Right lobe of liver (tissue), 6 donors: ENCODE measurements at regions of chr11 and their contacts with region 1.

Region 1: GRCh38 chr11:86193297-86194095 is 51.1 kb upstream of the EED start:
- DNase-seq: peak; percentile 59 to 76 (median 66)
- ATAC-seq: peak; percentile 99 to 100 (median 100)
- H3K4me3 ChIP-seq: peak overlapping the region in 2 of 3 donors; percentile 13 to 28
- H3K27ac ChIP-seq: peak overlapping the region in 2 of 3 donors; percentile 20 to 21
- H3K4me1 ChIP-seq: peaks cover 0 to 10% (median 0%) of the 10 kb centered on the region in 4 donors
- H3K27me3 ChIP-seq: no peaks in the 10 kb centered on the region
- CTCF ChIP-seq: peak; percentile 74 to 88 (median 78)
- POLR2A ChIP-seq: no peak

Region 2: DNA sequence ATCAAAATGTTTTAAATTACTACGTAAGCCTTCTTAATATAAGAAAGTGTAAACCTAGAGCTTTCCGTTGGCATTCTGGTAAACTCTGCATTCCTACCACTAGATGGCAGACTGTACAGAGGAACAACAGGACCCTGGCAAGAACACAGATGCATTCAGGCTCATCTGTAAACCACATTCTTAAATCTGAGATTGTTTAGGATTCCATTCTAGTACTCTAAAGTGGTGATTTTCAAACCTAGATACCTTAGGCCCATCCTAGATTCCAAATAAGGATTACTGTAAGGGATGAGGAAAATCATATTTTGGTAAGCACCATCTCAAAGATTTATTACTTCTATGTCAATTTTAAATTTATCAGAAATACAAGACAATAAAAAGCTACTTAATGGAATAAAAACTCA is 151.5 kb before region 1 on chr11:
- intact Hi-C with region 1: loop called in 1 of 2 experiments (anchors 10 kb)
- DNase-seq: peak in 1 of 3 donors; percentile 62
- ATAC-seq: peak; percentile 95 to 97 (median 96)
- H3K4me3 ChIP-seq: no peak overlapping the region
- H3K27ac ChIP-seq: peak overlapping the region in 2 of 3 donors; percentile 5 to 6
- H3K4me1 ChIP-seq: peaks cover 0 to 43% (median 12%) of the 10 kb centered on the region in 4 donors
- H3K27me3 ChIP-seq: no peaks in the 10 kb centered on the region
- CTCF ChIP-seq: peak; percentile 90 to 99 (median 96)
- POLR2A ChIP-seq: no peak